ENCODE measurements at regions of chr22 and their contacts with region 1.

Region 1: DNA sequence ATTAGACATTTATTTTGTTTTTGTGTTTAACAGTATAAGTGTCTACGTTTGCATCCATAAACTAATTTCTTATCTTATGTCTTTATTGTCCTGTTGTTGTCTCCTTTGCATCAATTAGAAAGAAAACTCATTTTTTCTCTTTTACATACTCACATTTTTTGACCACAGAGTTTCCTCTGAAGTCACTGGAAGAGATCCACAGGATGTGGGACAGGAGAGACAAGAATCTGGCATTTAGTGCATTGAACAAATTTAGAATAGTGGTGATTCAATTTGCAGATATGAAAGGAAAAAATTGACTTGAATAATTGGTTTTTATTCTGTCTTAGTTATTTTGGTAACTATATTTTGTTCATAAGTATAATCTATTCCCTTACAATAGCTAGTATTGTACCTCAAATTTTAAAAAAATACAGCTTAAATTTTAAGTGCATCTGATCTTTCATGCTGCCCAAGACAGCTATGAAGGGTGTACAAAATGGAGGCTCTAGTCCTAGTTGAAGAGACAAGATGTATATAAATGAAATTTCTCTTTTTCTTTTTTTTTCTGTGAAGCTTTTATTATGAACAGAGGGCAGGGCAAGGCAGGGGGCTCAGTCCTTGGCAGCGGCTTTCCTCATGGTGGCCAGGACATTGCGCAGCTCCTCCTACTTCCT is 24.4 kb downstream of the HORMAD2 start:
- DNase-seq: no peak
- H3K4me3 ChIP-seq: no peak overlapping the region
- H3K27ac ChIP-seq: no peak overlapping the region
- H3K27me3 ChIP-seq: no peaks in the 10 kb centered on the region
- CTCF ChIP-seq: no peak

Region 2: DNA sequence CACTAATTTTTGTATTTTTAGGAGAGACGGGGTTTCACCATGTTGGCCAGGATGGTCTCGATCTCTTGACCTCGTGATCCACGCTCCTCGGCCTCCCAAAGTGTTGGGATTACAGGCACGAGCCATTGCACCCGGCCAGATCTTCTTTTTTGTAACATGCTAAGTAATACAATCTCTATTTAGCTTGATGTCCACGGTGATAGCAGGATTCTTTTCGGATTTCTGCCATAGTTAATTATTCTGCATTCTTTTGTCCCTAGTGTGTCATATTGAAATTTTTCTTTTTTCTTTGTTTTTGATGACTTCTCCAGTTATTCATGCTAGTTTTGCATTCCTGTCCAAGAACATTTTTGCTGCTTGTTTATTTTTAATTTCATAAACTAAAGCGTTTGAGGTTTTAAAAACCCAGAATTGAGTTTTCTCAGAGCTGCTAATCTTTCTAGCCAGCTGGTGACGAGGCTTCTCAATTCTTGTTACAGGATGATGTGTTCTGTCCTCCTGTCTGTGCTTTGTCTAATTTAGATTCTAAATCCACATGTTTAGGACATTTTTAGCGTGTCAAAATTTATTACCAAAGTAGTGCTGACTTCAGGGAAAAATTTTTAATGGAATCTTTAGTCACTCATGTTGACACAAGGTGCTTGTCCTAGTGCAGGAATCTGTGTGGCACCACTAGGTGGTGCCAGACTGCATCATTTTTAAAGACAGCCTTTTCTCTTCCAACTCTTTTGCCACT is 479.4 kb before region 1 on chr22:
- CTCF ChIA-PET with region 1: interaction called, 11 read pairs
- POLR2A ChIA-PET with region 1: no interaction called
- DNase-seq: no peak
- H3K4me3 ChIP-seq: no peak overlapping the region
- H3K27ac ChIP-seq: peak overlapping the region; percentile 53
- H3K27me3 ChIP-seq: no peaks in the 10 kb centered on the region
- CTCF ChIP-seq: peak; percentile 91

Region 3: DNA sequence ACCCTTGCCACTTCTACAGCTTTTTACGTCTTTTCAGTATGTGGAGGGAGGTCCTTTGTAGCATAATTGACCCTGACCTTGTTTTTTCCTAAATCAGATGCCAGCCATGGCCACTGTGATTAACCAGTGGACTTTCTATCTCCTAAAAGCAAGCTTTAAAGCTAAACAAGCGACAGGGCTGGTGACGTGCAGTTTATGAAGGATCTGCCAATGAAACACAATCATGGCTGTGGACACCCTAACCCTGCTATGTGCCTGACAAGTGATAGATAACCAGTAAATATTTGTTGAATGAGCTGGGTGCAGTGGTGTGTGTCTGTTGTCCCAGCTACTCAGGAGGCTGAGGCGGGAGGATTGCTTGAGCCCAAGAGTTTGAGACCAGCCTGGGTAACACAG is 77.7 kb after region 1 on chr22:
- CTCF ChIA-PET with region 1: interaction called, 13 read pairs
- POLR2A ChIA-PET with region 1: no interaction called
- DNase-seq: no peak
- H3K4me3 ChIP-seq: no peak overlapping the region
- H3K27ac ChIP-seq: no peak overlapping the region
- H3K27me3 ChIP-seq: no peaks in the 10 kb centered on the region
- CTCF ChIP-seq: no peak

Region 4: GRCh38 chr22:30235687-30236170 is 131.1 kb after region 1 on chr22:
- CTCF ChIA-PET with region 1: interaction called, 12 read pairs
- POLR2A ChIA-PET with region 1: no interaction called
- DNase-seq: peak; percentile 61
- H3K4me3 ChIP-seq: no peak overlapping the region
- H3K27ac ChIP-seq: peak overlapping the region; percentile 90
- H3K27me3 ChIP-seq: no peaks in the 10 kb centered on the region
- CTCF ChIP-seq: no peak

Region 5: DNA sequence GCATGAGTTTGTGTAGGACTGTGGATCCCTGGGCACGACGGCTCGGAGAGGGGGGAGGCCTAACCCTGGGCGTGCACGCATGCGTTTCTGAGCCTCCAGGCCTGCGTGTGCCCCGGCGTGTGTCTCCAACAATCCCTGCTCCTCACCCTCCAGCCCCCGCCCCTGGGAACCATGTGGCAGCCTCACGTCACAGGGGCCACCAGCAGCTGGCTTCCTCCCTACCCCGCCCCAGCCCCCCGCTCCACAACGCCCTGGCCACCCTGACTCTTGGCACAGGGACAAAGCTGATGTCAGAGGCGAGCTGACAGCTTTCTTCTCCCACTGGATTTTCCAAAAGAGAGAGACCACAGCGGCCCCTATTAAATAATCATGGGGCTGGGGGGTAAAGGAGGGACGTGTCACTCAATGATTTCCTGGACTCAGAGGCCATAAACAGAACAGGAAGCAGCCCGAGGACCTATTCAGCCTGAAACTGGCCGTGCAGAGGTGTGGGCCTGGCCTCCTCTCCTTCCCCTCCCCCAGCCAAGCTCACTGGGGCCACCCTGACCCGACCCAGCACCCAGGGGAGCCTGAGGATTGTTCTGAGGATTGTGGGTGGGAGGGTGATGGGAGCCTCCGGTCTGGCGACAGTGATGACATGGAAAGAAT is 148.7 kb after region 1 on chr22:
- CTCF ChIA-PET with region 1: interaction called, 18 read pairs
- POLR2A ChIA-PET with region 1: no interaction called
- DNase-seq: no peak
- H3K4me3 ChIP-seq: no peak overlapping the region
- H3K27ac ChIP-seq: peak overlapping the region; percentile 77
- H3K27me3 ChIP-seq: no peaks in the 10 kb centered on the region
- CTCF ChIP-seq: no peak

Region 6: DNA sequence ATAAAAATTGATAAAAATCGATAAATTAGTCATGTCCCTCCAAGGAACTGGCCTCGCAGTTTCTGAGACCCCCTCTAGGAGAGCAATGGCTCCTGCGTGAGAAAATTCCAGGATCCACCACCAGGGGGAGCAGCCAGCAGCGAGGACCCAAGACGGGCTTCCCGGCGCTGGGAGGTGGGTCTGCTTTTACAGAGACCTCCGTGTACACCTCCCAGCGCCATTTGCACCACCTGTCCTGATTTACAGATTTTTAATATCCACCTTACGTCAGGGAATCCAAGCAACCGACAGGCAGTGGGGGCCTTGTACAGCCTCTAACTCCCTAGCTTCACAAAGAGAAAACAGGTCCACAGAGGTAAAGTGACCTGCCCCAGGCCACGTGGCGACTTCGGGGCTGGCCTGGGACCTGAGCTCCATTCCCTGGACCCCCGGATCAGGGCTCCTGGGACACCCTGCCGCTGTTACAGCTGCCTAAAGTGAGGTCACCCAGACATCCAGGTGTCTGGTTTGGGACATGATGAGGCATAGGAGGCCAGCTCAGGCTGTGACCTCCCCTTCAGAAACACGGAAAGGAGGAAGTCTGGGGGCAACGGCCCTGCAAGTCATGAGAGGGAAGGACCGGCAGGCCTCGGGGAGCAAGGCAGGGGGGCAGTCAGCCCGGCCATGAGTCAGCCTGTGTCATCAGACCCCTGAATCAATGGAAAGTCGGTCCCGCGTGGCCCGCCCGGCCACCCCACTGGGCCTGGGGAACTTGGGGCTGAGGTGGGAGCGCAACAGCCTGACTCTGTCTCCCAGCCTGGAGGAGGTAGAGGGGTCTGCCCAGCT is 158.5 kb after region 1 on chr22:
- CTCF ChIA-PET with region 1: interaction called, 13 read pairs
- POLR2A ChIA-PET with region 1: no interaction called
- DNase-seq: no peak
- H3K4me3 ChIP-seq: peak overlapping the region; percentile 32
- H3K27ac ChIP-seq: no peak overlapping the region
- H3K27me3 ChIP-seq: no peaks in the 10 kb centered on the region
- CTCF ChIP-seq: peak; percentile 97

Region 7: DNA sequence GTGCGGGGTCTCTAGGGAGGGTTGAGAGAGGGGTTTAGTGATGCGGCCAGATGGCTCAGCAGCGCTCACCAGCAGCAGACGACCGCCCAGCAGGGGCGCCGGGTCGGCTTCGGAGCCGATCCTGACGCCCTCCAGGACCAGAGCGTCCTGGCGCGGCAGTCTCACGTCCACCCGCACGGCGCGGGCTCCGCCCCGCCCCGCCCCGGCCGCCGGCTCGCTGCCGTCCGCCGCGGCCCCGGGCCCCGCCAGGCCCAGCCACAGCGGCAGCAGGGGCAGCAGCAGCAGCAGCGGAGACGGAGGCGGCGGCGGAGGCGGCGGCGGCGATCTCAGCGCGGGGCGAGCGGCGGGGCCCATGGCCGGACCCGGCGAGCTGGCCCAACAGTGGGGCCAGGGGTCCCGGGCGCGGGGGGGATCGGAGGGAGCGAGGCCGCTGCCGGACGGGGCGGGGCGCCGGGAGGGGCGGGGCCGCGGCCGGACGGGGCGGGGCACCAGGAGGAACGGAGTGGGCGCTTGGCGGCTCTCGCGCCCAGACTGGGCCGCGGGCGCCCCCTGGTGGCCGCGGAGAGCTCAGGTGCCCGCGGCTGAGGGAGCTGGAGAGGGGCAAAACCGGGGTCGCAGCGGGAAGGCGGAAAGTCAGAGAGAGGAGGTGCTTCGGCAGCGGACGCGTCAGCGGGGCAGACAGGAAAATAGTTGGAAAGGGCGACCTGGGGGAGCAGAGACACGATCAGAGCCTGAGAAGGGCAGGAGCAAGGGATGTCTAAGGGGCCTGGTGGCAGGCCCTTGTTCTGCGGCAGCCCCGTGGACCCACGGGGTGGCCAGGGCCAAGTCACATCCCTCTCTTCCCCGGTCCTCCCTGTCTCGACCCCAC is 282.6 kb after region 1 on chr22 and contains the start of gene RNF215:
- CTCF ChIA-PET with region 1: interaction called, 10 read pairs
- POLR2A ChIA-PET with region 1: no interaction called
- DNase-seq: peak; percentile 18
- H3K4me3 ChIP-seq: peak within 1 kb of the TSS; percentile 72
- H3K27ac ChIP-seq: peak within 1 kb of the TSS; percentile 21
- H3K27me3 ChIP-seq: no peaks in the 10 kb centered on the region
- CTCF ChIP-seq: peak; percentile 75
- polyA plus RNA-seq, gene RNF215: 11.4 and 12.1 TPM in 2 replicates

Measured in AG04450 (cell line).